ENCODE measurements at regions of chr15 and their contacts with region 1.

Region 1: GRCh38 chr15:95025924-95026728 is 794.8 kb downstream of the MCTP2 start:
- DNase-seq: peak; percentile 78
- H3K4me3 ChIP-seq: no peak overlapping the region
- H3K27ac ChIP-seq: no peak overlapping the region
- H3K4me1 ChIP-seq: peaks cover 2% of the 10 kb centered on the region
- H3K27me3 ChIP-seq: no peaks in the 10 kb centered on the region
- CTCF ChIP-seq: peak; percentile 62 to 76
- POLR2A ChIP-seq: no peak

Region 2: GRCh38 chr15:94607176-94607654 is 418.9 kb before region 1 on chr15:
- CTCF ChIA-PET with region 1: interaction called, 11 read pairs
- POLR2A ChIA-PET with region 1: no interaction called
- dilution Hi-C with region 1: no loop called
- intact Hi-C with region 1: no loop called
- DNase-seq: peak; percentile 96
- H3K4me3 ChIP-seq: no peak overlapping the region
- H3K27ac ChIP-seq: peak overlapping the region; percentile 97
- H3K4me1 ChIP-seq: peaks cover 40% of the 10 kb centered on the region
- H3K27me3 ChIP-seq: no peaks in the 10 kb centered on the region
- CTCF ChIP-seq: no peak
- POLR2A ChIP-seq: peak; percentile 75

Region 3: DNA sequence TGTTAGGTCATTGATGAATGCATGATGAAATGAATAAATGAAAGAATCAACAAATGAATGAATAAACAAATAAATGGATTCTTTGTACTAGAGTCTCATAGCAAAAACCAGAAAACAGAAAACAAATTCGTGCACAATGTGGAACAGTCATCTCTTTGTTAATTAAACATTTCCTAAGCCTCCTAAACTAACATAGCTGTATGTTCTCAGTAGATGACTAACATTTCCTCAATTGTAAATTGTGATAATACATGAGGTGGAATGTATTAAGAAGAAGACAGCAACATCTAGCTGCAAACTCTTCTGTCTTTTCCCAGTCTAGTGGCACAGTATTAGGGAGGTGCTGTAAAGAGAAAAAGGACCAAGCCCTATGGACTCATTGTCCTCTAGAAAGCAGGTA is 226.3 kb after region 1 on chr15:
- CTCF ChIA-PET with region 1: interaction called, 4 read pairs
- POLR2A ChIA-PET with region 1: no interaction called
- dilution Hi-C with region 1: no loop called
- intact Hi-C with region 1: loop called (anchors 1 kb)
- DNase-seq: peak; percentile 82
- H3K4me3 ChIP-seq: no peak overlapping the region
- H3K27ac ChIP-seq: peak overlapping the region; percentile 59
- H3K4me1 ChIP-seq: peaks cover 32% of the 10 kb centered on the region
- H3K27me3 ChIP-seq: no peaks in the 10 kb centered on the region
- CTCF ChIP-seq: no peak
- POLR2A ChIP-seq: no peak

Region 4: DNA sequence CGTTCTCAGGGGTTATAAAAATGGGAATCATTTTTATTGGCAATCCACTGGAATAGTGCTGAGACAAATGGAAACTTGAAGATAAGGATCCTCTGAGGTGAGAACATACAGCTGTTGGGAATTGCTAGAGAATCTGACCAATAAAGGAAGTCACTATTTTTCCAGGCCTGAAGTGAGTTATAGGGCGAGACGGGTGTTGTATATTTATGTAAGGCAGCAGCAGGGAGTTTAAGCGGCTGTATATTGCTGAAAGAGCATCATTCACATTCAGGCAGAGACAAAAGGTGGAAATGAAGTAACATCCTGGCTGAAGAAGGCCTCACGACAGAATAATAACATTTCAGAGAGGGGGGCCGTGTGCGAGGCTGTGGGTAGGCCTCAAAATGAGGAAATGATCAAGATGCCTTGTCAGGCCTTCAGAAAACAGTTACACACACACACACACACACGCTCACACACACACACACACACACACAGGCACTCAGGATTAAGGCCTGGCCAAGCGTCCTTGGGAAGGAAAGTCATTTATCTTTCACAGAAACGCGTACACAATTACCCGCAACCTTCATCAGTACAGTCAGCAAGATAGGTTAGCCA is 339.5 kb after region 1 on chr15:
- CTCF ChIA-PET with region 1: interaction called, 4 read pairs
- POLR2A ChIA-PET with region 1: no interaction called
- dilution Hi-C with region 1: no loop called
- intact Hi-C with region 1: loop called (anchors 1 kb)
- DNase-seq: peak; percentile 100
- H3K4me3 ChIP-seq: no peak overlapping the region
- H3K27ac ChIP-seq: peak overlapping the region; percentile 98
- H3K4me1 ChIP-seq: peaks cover 37% of the 10 kb centered on the region
- H3K27me3 ChIP-seq: no peaks in the 10 kb centered on the region
- CTCF ChIP-seq: no peak
- POLR2A ChIP-seq: peak; percentile 87

Region 5: GRCh38 chr15:95684693-95685115 is 658.6 kb after region 1 on chr15:
- CTCF ChIA-PET with region 1: no interaction called
- POLR2A ChIA-PET with region 1: no interaction called
- dilution Hi-C with region 1: no loop called
- intact Hi-C with region 1: loop called (anchors 10 kb)
- DNase-seq: peak; percentile 97
- H3K4me3 ChIP-seq: no peak overlapping the region
- H3K27ac ChIP-seq: peak overlapping the region; percentile 66
- H3K4me1 ChIP-seq: peaks cover 22% of the 10 kb centered on the region
- H3K27me3 ChIP-seq: no peaks in the 10 kb centered on the region
- CTCF ChIP-seq: no peak
- POLR2A ChIP-seq: peak; percentile 66

Region 6: GRCh38 chr15:96893159-96893906 is 1867.2 kb after region 1 on chr15:
- CTCF ChIA-PET with region 1: interaction called, 3 read pairs
- POLR2A ChIA-PET with region 1: no interaction called
- dilution Hi-C with region 1: no loop called
- intact Hi-C with region 1: loop called (anchors 2 kb)
- DNase-seq: peak; percentile 80
- H3K4me3 ChIP-seq: no peak overlapping the region
- H3K27ac ChIP-seq: no peak overlapping the region
- H3K4me1 ChIP-seq: peaks cover 4% of the 10 kb centered on the region
- H3K27me3 ChIP-seq: no peaks in the 10 kb centered on the region
- CTCF ChIP-seq: peak; percentile 62 to 70
- POLR2A ChIP-seq: no peak

Measured in endothelial cell of umbilical vein (primary cell).